CD14-positive monocyte (primary cell): ENCODE measurements at regions of chr13 and their contacts with region 1.

Region 1: DNA sequence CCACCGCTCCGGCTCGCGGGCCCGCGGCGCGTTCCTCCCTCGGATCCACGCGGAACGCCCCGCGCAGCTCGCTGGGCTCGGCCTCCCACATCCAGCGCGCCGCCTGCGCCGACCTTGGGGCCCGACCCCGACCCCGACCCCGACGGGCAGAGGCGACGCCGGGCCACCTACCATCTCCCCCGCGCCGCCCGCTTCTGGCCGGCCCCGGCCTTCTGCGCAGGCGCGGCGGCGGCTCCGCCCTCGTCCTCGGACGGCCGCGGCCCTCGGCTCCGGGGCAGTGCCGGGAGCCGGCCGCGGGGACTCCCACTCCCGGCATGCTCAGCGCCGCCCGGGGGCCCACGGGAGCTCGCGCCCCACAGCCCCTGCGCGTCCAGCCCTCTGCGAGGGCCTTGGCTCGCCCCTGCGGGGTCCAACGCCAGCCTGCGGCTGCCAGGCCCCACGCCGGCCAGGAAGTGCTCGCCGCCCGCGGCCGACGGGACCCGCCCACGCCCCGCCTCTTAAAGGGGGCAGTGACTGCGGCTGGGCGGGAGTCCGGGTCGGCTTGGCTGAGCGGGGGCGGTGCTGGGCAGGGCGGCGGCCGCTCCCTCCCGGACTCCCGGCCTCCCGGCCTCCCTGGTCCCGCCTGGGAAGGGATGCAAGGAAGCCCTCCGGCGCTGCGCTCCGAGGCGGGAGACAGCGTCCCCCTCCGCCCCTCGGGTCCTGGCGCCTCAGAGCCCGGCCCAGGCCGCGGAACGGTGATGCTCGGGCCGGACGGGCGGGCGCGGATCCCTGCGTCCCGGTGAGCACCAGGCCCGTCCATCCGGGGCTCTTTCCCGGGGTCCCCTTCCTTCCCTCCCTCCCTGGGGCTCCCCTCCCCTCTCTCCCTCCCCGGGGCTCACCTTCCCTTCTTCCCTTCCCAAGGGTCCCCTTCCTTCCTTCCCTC is at the start of gene DCUN1D2:
- DNase-seq: peak; percentile 86 to 90 (median 88)
- H3K4me3 ChIP-seq: peak within 1 kb of the TSS; percentile 83 to 91 (median 88)
- H3K4me3 Mint-ChIP-seq: peak within 1 kb of the TSS; percentile 90 to 96
- H3K27ac ChIP-seq: peak within 1 kb of the TSS; percentile 73 to 94
- H3K27ac Mint-ChIP-seq: peak within 1 kb of the TSS; percentile 66 to 96 (median 88)
- H3K4me1 ChIP-seq: peaks cover 51 to 52% of the 10 kb centered on the region in 2 donors
- H3K4me1 Mint-ChIP-seq: peaks cover 60% of the 10 kb centered on the region
- H3K27me3 ChIP-seq: no peaks in the 10 kb centered on the region
- H3K27me3 Mint-ChIP-seq: peaks cover 0 to 1% (median 0%) of the 10 kb centered on the region in 3 donors
- CTCF ChIP-seq: no peak
- polyA plus RNA-seq, gene DCUN1D2: 3.1 to 16.7 (median 6.1) TPM

Region 2: DNA sequence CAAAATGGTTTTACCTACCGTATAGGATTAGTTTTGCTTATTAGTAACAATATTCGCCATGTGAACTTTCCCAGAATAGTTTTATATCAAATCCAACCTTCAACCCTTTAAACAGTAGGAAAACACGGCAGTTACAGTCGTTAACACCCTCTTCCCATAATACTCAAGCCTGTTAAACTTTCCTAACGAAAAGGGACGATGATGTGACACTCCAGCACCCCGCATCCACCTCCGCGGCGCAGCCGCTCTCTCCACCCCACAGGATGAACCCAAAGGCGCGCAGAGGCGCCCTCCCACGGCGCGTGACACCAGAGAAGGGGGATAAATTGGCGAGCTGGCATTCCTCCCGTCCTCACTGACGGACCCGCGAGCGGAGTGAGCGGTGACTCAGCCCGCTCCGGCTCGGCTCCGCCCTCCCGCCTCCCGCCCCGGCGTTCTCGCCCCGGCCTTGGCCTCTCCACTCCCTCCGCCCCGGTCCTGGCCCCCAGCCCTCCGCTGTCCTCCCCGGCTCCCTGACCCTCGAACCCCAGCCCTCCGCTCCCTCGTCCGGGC is 903.5 kb before region 1 on chr13:
- intact Hi-C with region 1: loop called in 1 of 2 experiments (anchors 10 kb)
- DNase-seq: peak; percentile 78 to 82 (median 81)
- H3K4me3 ChIP-seq: peak overlapping the region; percentile 83 to 96 (median 88)
- H3K4me3 Mint-ChIP-seq: peak overlapping the region; percentile 95 to 99
- H3K27ac ChIP-seq: peak overlapping the region; percentile 87 to 91
- H3K27ac Mint-ChIP-seq: peak overlapping the region; percentile 91 to 99 (median 97)
- H3K4me1 ChIP-seq: peaks cover 48 to 60% of the 10 kb centered on the region in 2 donors
- H3K4me1 Mint-ChIP-seq: peaks cover 58% of the 10 kb centered on the region
- H3K27me3 ChIP-seq: no peaks in the 10 kb centered on the region
- H3K27me3 Mint-ChIP-seq: peaks cover 0 to 2% (median 0%) of the 10 kb centered on the region in 3 donors
- CTCF ChIP-seq: no peak

Region 3: DNA sequence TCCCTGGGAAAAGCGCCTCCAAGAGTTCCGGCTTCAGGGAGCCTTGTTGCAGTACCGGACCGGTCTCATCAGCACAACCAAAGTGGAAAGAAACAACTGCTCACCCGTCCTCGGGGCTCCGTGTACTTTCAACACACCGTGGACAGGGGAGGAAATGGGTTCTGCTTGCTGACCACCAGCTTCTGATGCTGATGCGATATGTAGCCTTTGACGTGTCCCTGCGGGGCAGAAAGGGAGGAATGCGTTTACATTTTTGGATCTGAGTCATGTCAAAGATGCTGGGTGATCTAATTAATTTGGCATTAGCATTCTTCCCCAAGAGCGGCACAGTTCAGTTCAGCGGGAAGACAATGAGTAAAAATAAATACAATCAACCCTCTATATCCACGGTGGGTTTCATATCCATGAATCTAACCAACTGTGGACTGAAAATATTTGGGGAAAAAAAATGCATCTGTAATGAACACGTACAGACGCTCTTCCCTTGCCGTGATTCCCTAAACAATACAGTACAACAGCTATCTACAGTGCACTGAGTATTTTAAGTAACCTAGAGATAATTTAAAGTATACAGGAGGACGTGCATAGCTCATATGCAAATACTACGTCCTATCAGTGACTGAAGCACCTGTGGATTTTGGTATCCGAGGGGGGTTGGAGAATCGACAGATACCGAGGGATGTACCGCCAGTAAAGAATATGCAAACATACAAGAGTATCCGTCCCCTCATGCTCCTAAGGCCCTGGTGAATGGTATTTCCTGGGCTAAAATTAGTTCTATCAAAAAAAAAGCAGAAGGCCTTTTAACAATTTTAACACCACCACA is 312.5 kb before region 1 on chr13:
- intact Hi-C with region 1: no loop called
- DNase-seq: no peak
- H3K4me3 ChIP-seq: no peak overlapping the region
- H3K4me3 Mint-ChIP-seq: no peak overlapping the region
- H3K27ac ChIP-seq: no peak overlapping the region
- H3K27ac Mint-ChIP-seq: peak overlapping the region in 4 of 7 donors; percentile 14 to 41 (median 21)
- H3K4me1 ChIP-seq: peaks cover 11 to 19% of the 10 kb centered on the region in 2 donors
- H3K4me1 Mint-ChIP-seq: peaks cover 15% of the 10 kb centered on the region
- H3K27me3 ChIP-seq: no peaks in the 10 kb centered on the region
- H3K27me3 Mint-ChIP-seq: peaks cover 0 to 8% (median 2%) of the 10 kb centered on the region in 3 donors
- CTCF ChIP-seq: no peak

Region 4: DNA sequence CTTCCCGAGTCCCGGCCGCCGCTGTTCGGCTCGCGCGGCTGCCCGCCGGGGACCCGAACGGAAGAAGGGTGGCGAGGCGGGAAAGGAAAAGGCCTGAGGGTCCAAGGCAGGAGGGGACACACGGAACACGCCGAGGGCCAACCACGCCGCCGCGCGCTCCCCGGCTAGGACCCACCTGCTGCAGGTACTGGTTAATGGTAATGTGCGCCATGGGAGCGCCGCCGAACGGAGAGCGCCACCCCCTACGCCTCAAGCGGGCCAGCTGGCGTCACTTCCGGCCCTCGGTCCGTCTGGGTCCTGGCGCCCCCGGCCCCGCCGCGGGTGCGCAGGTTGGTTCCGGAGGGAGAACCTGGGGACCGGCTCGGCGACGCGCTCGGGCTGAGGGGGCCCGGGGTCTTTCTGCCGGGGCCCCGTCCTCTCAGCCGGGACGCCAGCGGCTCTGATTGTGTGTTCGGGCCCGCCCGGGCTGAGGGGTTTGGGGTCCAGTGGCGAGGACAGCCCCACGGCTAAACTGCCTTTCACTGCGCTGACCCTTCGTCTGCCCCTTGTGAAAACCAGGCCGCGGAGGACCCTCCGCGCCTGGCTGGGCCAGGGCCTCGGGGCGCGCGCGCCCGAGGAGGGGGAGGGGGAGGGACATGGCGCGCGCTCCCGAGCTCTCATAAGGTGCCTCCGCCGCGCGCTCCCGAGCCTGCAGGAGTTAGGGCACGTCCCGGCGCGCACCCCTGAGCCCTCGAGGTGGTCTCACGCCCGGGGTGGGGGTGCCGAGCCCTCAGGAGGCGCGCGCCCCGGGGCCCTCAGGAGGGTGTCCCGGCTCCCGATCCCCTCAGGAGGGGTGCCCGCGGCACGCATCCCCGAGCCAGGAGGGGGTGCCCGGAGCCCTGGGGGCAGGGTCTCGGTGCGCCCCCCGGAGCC is 282.1 kb before region 1 on chr13 and contains the start of gene PCID2:
- intact Hi-C with region 1: loop called in 1 of 2 experiments (anchors 5 kb)
- DNase-seq: peak; percentile 82 to 89 (median 85)
- H3K4me3 ChIP-seq: peak within 1 kb of the TSS; percentile 76 to 92 (median 90)
- H3K4me3 Mint-ChIP-seq: peak within 1 kb of the TSS; percentile 86 to 89
- H3K27ac ChIP-seq: peak within 1 kb of the TSS; percentile 89 to 98
- H3K27ac Mint-ChIP-seq: peak within 1 kb of the TSS; percentile 76 to 93 (median 88)
- H3K4me1 ChIP-seq: peaks cover 14 to 30% of the 10 kb centered on the region in 2 donors
- H3K4me1 Mint-ChIP-seq: peaks cover 39% of the 10 kb centered on the region
- H3K27me3 ChIP-seq: no peaks in the 10 kb centered on the region
- H3K27me3 Mint-ChIP-seq: no peaks in the 10 kb centered on the region
- CTCF ChIP-seq: no peak
- polyA plus RNA-seq, gene PCID2: 31.5 to 39.8 (median 34.2) TPM

Region 5: DNA sequence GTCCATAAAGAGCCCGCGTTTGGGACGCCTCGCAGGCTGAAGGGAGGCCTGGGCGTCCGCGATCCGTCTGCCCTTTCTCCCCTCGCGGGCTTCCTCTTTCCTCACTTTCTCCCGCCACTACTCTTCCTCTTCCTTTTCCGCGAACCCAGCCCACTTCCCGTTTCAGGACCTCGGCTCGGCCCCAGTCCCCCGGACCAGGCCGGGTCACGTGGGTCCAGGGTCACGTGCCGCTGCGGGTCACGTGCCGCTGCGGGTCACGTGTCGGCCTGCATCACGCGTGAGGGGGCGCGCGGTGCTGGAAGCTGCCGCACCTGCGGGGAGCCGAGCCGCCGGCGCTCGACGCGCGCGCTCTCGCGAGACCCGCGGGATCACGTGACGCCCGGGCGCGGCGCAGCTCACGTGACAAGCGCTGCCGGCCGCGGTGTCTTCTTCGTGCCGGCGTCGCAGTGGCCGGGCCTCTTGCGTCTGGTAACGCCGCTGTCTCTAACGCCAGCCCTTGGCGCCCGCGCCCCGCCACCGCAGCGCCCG is 193.9 kb before region 1 on chr13 and contains the start of gene LAMP1:
- intact Hi-C with region 1: loop called (anchors 10 kb)
- DNase-seq: peak; percentile 92 to 98 (median 98)
- H3K4me3 ChIP-seq: peak within 1 kb of the TSS; percentile 45 to 76 (median 65)
- H3K4me3 Mint-ChIP-seq: peak within 1 kb of the TSS; percentile 91 to 96
- H3K27ac ChIP-seq: peak within 1 kb of the TSS; percentile 70 to 87
- H3K27ac Mint-ChIP-seq: peak within 1 kb of the TSS; percentile 86 to 96 (median 94)
- H3K4me1 ChIP-seq: peaks cover 40 to 58% of the 10 kb centered on the region in 2 donors
- H3K4me1 Mint-ChIP-seq: peaks cover 40% of the 10 kb centered on the region
- H3K27me3 ChIP-seq: peaks cover 0 to 6% of the 10 kb centered on the region in 2 donors
- H3K27me3 Mint-ChIP-seq: peaks cover 6 to 20% (median 16%) of the 10 kb centered on the region in 3 donors
- CTCF ChIP-seq: no peak
- polyA plus RNA-seq, gene LAMP1: 22.0 to 122 (median 24.5) TPM

Region 6: DNA sequence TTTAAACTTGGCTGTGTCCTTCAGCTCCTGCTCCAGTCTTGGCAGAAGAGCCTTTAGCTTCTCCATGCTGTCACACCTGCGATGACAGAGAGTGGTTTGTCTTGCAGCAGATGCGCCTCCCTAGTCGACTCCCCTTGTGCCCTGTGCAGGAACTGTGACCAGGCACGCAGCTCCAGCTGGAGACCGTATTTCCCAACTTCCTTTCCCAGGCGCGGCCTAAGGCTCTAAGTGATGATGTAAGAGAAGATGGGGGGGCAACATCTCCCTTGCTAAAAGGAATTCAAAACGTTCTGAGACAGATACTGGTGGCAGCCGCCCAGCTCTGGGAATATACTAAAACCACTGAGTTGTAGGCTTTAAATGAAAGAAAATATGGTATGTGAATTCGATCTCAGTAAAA is 16.6 kb before region 1 on chr13:
- intact Hi-C with region 1: no loop called
- DNase-seq: peak; percentile 76 to 88 (median 83)
- H3K4me3 ChIP-seq: peak overlapping the region in 1 of 3 experiments; percentile 38
- H3K4me3 Mint-ChIP-seq: peak overlapping the region; percentile 38 to 69
- H3K27ac ChIP-seq: peak overlapping the region; percentile 56 to 60
- H3K27ac Mint-ChIP-seq: peak overlapping the region; percentile 62 to 89 (median 79)
- H3K4me1 ChIP-seq: peaks cover 13 to 14% of the 10 kb centered on the region in 2 donors
- H3K4me1 Mint-ChIP-seq: peaks cover 25% of the 10 kb centered on the region
- H3K27me3 ChIP-seq: no peaks in the 10 kb centered on the region
- H3K27me3 Mint-ChIP-seq: no peaks in the 10 kb centered on the region
- CTCF ChIP-seq: no peak

Region 7: DNA sequence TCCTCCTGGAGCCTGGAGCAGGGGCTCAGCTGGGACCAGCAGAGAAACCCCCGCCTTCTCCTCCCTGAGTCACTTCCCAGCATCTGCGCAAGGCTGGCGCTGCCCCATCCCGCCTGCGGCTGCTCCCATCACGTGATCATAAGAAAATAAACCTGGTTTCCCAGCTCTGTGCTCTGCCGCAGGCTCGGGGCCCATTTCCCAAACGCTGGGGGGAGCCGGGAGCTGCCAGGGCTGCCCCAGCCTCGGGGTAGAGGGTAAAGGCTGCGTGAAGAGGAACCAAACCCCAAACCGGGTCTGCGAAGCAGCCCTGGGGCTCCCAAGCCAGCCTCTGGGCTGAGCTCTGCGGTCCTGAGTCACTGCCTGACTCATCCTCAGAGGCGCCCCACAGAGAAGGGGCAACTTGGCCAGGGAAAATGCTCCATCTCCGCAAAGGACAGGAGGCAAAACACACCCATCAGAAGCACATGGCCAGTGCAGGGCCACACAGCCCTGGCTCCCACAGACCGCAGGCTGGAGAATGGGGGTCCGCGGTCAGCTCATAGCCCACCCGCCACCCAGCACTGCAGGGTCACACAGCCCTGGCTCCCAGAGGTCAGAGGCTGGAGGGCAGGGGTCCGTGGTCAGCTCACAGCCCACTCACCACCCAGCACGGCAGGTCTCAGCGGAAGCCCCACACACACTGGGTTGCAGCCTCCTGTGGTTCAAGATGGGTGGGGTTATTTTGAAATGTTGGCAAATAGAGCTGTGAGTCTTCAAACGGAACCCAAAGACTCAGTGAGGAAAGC is 574.6 kb after region 1 on chr13:
- intact Hi-C with region 1: loop called in 1 of 2 experiments (anchors 10 kb)
- DNase-seq: peak; percentile 96 to 98 (median 97)
- H3K4me3 ChIP-seq: peak overlapping the region; percentile 19 to 72 (median 21)
- H3K4me3 Mint-ChIP-seq: peak overlapping the region; percentile 79 to 89
- H3K27ac ChIP-seq: peak overlapping the region; percentile 93 to 99
- H3K27ac Mint-ChIP-seq: peak overlapping the region; percentile 98 to 100 (median 99)
- H3K4me1 ChIP-seq: peaks cover 75 to 84% of the 10 kb centered on the region in 2 donors
- H3K4me1 Mint-ChIP-seq: peaks cover 70% of the 10 kb centered on the region
- H3K27me3 ChIP-seq: no peaks in the 10 kb centered on the region
- H3K27me3 Mint-ChIP-seq: peaks cover 0 to 1% (median 0%) of the 10 kb centered on the region in 3 donors
- CTCF ChIP-seq: no peak